Activated CD8-positive, alpha-beta memory T cell treated with anti-CD3 and anti-CD28 coated beads, Interleukin-2, amount 10 ng/mL, durations not matched to agents 7 days and 5 days (primary cell): ENCODE measurements at regions of chr11 and their contacts with region 1.

Region 1: GRCh38 chr11:12281571-12282478 is 95.5 kb upstream of the PARVA start:
- DNase-seq: peak; percentile 84
- ATAC-seq: peak; percentile 77
- H3K4me3 Mint-ChIP-seq: no peak overlapping the region
- H3K27ac Mint-ChIP-seq: no peak overlapping the region
- H3K4me1 Mint-ChIP-seq: peaks cover 3% of the 10 kb centered on the region
- H3K27me3 Mint-ChIP-seq: no peaks in the 10 kb centered on the region

Region 2: DNA sequence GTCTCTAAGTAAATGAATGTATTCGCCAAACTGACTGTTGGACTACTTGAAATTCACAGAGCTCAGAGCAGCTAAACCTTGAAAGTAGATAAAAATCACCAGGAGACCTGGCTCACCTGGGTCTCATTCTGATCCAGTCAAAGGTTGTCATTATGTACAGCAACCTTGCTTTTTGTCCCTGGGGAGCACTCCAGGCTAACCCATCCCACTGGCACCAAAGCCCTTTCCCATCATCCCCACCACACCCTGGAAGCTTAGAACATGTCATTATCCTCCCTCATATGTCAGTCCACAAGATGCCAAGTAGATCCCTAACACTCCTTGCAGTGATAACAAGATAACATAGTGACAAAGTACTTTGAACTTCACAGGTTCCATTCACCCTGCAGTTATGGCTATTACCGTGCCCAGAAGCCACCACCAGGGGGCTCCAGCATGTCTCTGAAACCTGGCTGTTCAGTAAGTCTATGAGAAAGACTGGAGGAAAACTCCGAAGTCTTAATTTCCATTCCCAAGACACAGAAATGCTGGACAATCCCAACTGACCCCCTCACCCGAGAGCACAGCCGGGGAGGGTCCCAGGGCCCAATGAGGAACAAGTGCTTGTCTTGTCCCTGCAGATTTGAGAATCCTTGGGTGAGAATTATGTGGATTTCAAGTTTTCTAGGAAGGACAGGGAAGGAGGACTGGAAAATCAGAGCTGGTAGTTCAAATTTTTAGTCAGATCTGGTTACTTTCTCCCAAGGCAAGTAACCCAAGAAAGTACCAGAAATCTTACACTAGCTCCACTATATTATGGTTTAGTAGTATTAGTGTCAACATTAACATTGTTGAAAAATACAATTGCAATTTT is 483.0 kb before region 1 on chr11:
- CTCF ChIA-PET with region 1: interaction called, 14 read pairs
- DNase-seq: peak; percentile 83
- ATAC-seq: peak; percentile 91
- H3K4me3 Mint-ChIP-seq: no peak overlapping the region
- H3K27ac Mint-ChIP-seq: no peak overlapping the region
- H3K4me1 Mint-ChIP-seq: no peaks in the 10 kb centered on the region
- H3K27me3 Mint-ChIP-seq: peaks cover 37% of the 10 kb centered on the region

Region 3: GRCh38 chr11:12061851-12062560 is 219.8 kb before region 1 on chr11:
- CTCF ChIA-PET with region 1: interaction called, 19 read pairs
- DNase-seq: peak; percentile 42
- ATAC-seq: peak; percentile 49
- H3K4me3 Mint-ChIP-seq: no peak overlapping the region
- H3K27ac Mint-ChIP-seq: peak overlapping the region; percentile 11
- H3K4me1 Mint-ChIP-seq: peaks cover 10% of the 10 kb centered on the region
- H3K27me3 Mint-ChIP-seq: no peaks in the 10 kb centered on the region